IMR-90 (cell line): ENCODE measurements at regions of chr18 and their contacts with region 1.

Region 1: GRCh38 chr18:22674272-22674671 is 256.6 kb upstream of the CTAGE1 start:
- DNase-seq: peak; percentile 94
- ATAC-seq: peak; percentile 92
- H3K4me3 ChIP-seq: no peak overlapping the region
- H3K27ac ChIP-seq: peak overlapping the region; percentile 10
- H3K4me1 ChIP-seq: peaks cover 13% of the 10 kb centered on the region; the same call in 1 of the 2 replicates
- H3K27me3 ChIP-seq: no peaks in the 10 kb centered on the region
- CTCF ChIP-seq: no peak
- POLR2A ChIP-seq: no peak
- RAD21 ChIP-seq: peak; percentile 29; the same call in 1 of the 2 replicates

Region 2: DNA sequence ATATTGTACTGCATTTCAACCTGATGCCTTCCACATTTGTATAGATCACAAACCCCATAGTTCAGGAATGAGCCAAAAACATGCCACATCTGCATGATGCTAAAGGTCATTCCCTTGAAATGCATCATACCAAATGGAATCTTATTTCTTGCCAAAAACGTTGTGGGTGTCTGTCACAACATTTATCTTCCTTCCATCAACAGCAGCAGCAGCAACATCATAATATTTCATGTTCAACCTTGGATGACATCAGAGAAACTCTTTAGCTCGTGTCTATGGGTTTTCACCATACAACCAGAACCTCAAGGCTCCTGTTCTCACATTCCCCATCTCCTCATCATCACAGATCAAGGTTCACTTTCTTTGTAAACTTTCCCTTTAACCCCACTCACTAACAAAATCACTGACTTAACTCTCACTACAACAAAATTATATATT is 35.2 kb before region 1 on chr18:
- CTCF ChIA-PET with region 1: no interaction called
- POLR2A ChIA-PET with region 1: no interaction called
- dilution Hi-C with region 1: no loop called
- in situ Hi-C with region 1: no loop called
- intact Hi-C with region 1: loop called (anchors 2 kb)
- DNase-seq: peak; percentile 88
- ATAC-seq: peak; percentile 70
- H3K4me3 ChIP-seq: no peak overlapping the region
- H3K27ac ChIP-seq: no peak overlapping the region
- H3K4me1 ChIP-seq: peaks cover 10% of the 10 kb centered on the region
- H3K27me3 ChIP-seq: no peaks in the 10 kb centered on the region
- CTCF ChIP-seq: no peak
- POLR2A ChIP-seq: no peak
- RAD21 ChIP-seq: no peak

Region 3: GRCh38 chr18:23143016-23143814 is 468.9 kb after region 1 on chr18:
- CTCF ChIA-PET with region 1: no interaction called
- POLR2A ChIA-PET with region 1: no interaction called
- dilution Hi-C with region 1: no loop called
- in situ Hi-C with region 1: no loop called
- intact Hi-C with region 1: no loop called
- DNase-seq: no peak
- ATAC-seq: no peak; the same call in none of the 2 replicates
- H3K4me3 ChIP-seq: no peak overlapping the region
- H3K27ac ChIP-seq: no peak overlapping the region
- H3K4me1 ChIP-seq: peaks cover 32% of the 10 kb centered on the region
- H3K27me3 ChIP-seq: no peaks in the 10 kb centered on the region
- CTCF ChIP-seq: no peak
- POLR2A ChIP-seq: no peak
- RAD21 ChIP-seq: no peak